PC-9 (cell line): ENCODE measurements at regions of chr3 and their contacts with region 1.

Region 1: GRCh38 chr3:161946443-161946960 is 449.9 kb downstream of the OTOL1 start:
- DNase-seq: no peak
- H3K4me3 ChIP-seq: no peak overlapping the region
- H3K27ac ChIP-seq: no peak overlapping the region
- H3K4me1 ChIP-seq: no peaks in the 10 kb centered on the region
- H3K27me3 ChIP-seq: no peaks in the 10 kb centered on the region
- CTCF ChIP-seq: no peak

Region 2: GRCh38 chr3:161649900-161650484 is 296.5 kb before region 1 on chr3:
- CTCF ChIA-PET with region 1: no interaction called
- POLR2A ChIA-PET with region 1: no interaction called
- intact Hi-C with region 1: no loop called
- DNase-seq: no peak
- H3K4me3 ChIP-seq: no peak overlapping the region
- H3K27ac ChIP-seq: no peak overlapping the region
- H3K4me1 ChIP-seq: no peaks in the 10 kb centered on the region
- H3K27me3 ChIP-seq: no peaks in the 10 kb centered on the region
- CTCF ChIP-seq: no peak

Region 3: DNA sequence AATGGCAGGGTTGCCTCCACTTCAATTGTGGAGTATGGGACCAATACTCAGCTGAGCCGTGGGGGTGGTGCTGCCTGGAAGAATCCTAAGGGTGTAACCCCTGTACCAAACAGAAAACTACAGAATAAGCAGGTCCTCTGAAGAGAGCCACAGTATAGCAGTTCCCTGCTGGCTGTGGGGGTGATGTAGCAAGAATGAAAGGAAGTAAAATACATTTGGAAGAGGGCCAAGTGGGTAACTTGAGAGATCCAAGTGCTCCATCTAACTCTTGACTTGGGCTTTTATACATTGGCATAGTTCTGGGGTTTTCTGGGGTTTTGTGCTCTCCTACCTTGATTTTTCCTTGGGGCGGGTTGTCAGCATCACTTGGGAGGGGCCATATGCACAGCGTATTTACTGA is 108.5 kb before region 1 on chr3:
- CTCF ChIA-PET with region 1: no interaction called
- POLR2A ChIA-PET with region 1: no interaction called
- intact Hi-C with region 1: no loop called
- DNase-seq: no peak
- H3K4me3 ChIP-seq: no peak overlapping the region
- H3K27ac ChIP-seq: no peak overlapping the region
- H3K4me1 ChIP-seq: no peaks in the 10 kb centered on the region
- H3K27me3 ChIP-seq: no peaks in the 10 kb centered on the region
- CTCF ChIP-seq: no peak

Region 4: GRCh38 chr3:162088668-162089067 is 142.2 kb after region 1 on chr3:
- CTCF ChIA-PET with region 1: no interaction called
- POLR2A ChIA-PET with region 1: no interaction called
- intact Hi-C with region 1: loop called (anchors 5 kb)
- DNase-seq: no peak
- H3K4me3 ChIP-seq: no peak overlapping the region
- H3K27ac ChIP-seq: no peak overlapping the region
- H3K4me1 ChIP-seq: no peaks in the 10 kb centered on the region
- H3K27me3 ChIP-seq: no peaks in the 10 kb centered on the region
- CTCF ChIP-seq: no peak